CD4-positive, alpha-beta memory T cell (primary cell): ENCODE measurements at regions of chr14 and their contacts with region 1.

Region 1: DNA sequence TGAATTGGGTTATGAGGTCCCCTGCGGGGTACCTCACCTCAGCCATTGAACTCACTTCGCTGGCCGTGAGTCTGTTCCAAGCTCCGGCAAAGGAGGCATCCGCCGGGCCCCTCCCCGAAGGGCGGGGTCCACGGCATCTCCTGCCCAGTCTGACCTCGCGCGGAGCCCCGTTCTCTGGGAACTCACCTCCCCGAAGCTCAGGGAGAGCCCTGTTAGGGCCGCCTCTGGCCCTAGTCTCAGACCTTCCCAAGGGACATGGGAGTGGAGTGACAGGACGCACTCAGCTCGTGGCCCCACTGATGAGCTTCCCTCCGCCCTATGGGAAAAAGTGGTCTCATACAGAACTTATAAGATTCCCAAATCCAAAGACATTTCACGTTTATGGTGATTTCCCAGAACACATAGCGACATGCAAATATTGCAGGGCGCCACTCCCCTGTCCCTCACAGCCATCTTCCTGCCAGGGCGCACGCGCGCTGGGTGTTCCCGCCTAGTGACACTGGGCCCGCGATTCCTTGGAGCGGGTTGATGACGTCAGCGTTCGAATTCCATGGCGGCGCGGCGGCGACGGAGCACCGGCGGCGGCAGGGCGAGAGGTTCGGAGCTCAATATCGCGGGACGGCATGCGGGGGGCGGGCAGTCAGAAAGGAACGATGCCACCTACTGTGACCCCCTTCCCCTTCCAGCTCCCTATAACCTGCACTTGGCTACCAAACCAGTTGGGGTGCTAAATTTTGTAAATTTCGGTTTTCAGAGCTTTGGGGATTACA is at the start of gene PARP2:
- DNase-seq: peak; percentile 93 to 96 (median 93)
- H3K4me3 ChIP-seq: peak within 1 kb of the TSS; percentile 67 to 71
- H3K4me3 Mint-ChIP-seq: peak within 1 kb of the TSS; percentile 92 to 99 (median 98)
- H3K27ac ChIP-seq: peak within 1 kb of the TSS; percentile 94
- H3K27ac Mint-ChIP-seq: peak within 1 kb of the TSS; percentile 97 to 100 (median 98)
- H3K4me1 ChIP-seq: peaks cover 7% of the 10 kb centered on the region
- H3K4me1 Mint-ChIP-seq: peaks cover 5 to 27% (median 10%) of the 10 kb centered on the region in 4 donors
- H3K27me3 ChIP-seq: no peaks in the 10 kb centered on the region
- H3K27me3 Mint-ChIP-seq: no peaks in the 10 kb centered on the region
- total RNA-seq, gene PARP2: 20.3 to 25.0 TPM

Region 2: GRCh38 chr14:20332788-20333493 is 10.3 kb before region 1 on chr14 and contains the start of gene CCNB1IP1:
- CTCF ChIA-PET with region 1: interaction called, 124 read pairs
- POLR2A ChIA-PET with region 1: interaction called, 70 read pairs
- intact Hi-C with region 1: loop called (anchors 1 kb)
- DNase-seq: peak; percentile 73 to 84 (median 73)
- H3K4me3 ChIP-seq: peak within 1 kb of the TSS; percentile 62 to 67
- H3K4me3 Mint-ChIP-seq: peak within 1 kb of the TSS; percentile 99 to 100 (median 99)
- H3K27ac ChIP-seq: peak within 1 kb of the TSS; percentile 67
- H3K27ac Mint-ChIP-seq: peak within 1 kb of the TSS; percentile 86 to 98 (median 98)
- H3K4me1 ChIP-seq: peaks cover 16% of the 10 kb centered on the region
- H3K4me1 Mint-ChIP-seq: peaks cover 20 to 41% (median 24%) of the 10 kb centered on the region in 4 donors
- H3K27me3 ChIP-seq: no peaks in the 10 kb centered on the region
- H3K27me3 Mint-ChIP-seq: no peaks in the 10 kb centered on the region
- total RNA-seq, gene CCNB1IP1: 21.2 to 24.3 TPM

Region 3: DNA sequence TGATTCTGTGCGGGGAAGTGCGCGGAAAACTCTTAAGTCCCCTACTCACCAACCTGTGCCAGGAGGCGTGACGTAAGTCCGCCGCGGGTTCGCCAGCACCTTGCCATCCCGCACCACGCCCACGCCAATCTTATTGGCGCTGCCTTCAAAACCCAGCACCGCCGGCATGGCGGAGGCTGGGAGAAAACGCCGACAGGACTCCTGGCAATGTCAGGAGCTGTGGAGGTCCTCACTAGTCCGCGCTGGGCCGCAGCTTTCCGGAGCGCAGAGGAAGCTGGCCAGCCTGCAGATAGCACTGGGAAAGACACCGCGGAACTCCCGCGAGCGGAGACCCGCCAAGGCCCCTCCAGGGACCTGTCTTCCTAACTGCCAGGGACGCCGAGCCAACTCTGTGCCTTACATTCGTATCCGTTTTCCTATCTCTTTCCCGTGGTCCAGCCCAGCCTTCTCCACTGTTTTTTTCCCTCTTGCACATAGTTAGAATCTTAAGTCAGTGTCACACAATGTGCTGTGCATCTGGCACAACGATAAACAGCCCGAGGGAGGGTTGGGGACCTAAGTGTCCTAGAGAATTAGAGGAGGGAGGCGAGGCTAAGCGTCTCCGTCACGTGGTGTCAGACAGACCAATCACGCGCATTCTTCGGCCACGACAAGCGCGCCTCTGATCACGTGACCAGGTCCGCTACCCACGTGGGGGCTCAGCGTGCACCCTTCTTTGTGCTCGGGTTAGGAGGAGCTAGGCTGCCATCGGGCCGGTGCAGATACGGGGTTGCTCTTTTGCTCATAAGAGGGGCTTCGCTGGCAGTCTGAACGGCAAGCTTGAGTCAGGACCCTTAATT is 111.5 kb after region 1 on chr14 and contains the starts of genes APEX1 and OSGEP:
- CTCF ChIA-PET with region 1: no interaction called
- POLR2A ChIA-PET with region 1: interaction called, 51 read pairs
- intact Hi-C with region 1: loop called (anchors 1 kb)
- DNase-seq: peak; percentile 96 to 99 (median 98)
- H3K4me3 ChIP-seq: peak within 1 kb of the TSS; percentile 70 to 99
- H3K4me3 Mint-ChIP-seq: peak within 1 kb of the TSS in 2 of 8 donors; percentile 13 to 23
- H3K27ac ChIP-seq: peak within 1 kb of the TSS; percentile 89
- H3K27ac Mint-ChIP-seq: peak within 1 kb of the TSS in 2 of 7 donors; percentile 19 to 55
- H3K4me1 ChIP-seq: peaks cover 53% of the 10 kb centered on the region
- H3K4me1 Mint-ChIP-seq: peaks cover 5 to 21% (median 12%) of the 10 kb centered on the region in 4 donors
- H3K27me3 ChIP-seq: no peaks in the 10 kb centered on the region
- H3K27me3 Mint-ChIP-seq: no peaks in the 10 kb centered on the region
- total RNA-seq, gene APEX1: 102 to 105 TPM
- total RNA-seq, gene OSGEP: 72.3 to 75.9 TPM

Region 4: DNA sequence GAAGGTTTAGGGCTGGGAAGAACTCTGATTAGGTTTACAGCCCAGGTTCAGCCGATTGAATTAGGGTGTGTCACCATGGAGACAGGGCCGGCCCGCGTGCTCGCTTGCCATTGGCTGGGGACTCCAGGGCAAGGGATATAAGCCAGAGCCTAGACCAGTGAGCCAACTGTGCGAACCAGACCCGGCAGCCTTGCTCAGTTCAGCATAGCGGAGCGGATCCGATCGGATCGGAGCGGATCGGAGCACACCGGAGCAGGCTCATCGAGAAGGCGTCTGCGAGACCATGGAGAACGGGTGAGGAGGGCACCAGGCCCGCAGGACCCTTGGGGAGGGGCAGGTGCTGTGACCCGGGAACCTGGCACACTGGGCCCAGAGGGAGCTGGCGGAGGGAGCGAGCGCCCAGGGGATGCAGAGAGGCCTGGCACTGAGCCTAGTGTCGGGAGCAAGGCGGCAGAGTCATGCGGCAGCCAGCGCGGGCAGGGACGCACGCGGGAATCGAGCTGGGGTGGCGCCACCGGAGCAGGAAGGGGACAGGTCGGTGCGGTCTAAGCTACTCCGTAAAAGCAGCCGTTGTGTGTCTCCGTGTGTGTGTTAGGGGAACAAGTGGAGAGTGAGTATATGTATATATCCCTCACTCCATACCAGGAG is 126.1 kb after region 1 on chr14 and contains the start of gene PNP:
- CTCF ChIA-PET with region 1: interaction called, 3 read pairs
- POLR2A ChIA-PET with region 1: interaction called, 20 read pairs
- intact Hi-C with region 1: no loop called
- DNase-seq: peak; percentile 84 to 92 (median 88)
- H3K4me3 ChIP-seq: peak within 1 kb of the TSS; percentile 84 to 92
- H3K4me3 Mint-ChIP-seq: peak within 1 kb of the TSS; percentile 97 to 100 (median 99)
- H3K27ac ChIP-seq: peak within 1 kb of the TSS; percentile 77
- H3K27ac Mint-ChIP-seq: peak within 1 kb of the TSS; percentile 94 to 99 (median 98)
- H3K4me1 ChIP-seq: peaks cover 47% of the 10 kb centered on the region
- H3K4me1 Mint-ChIP-seq: peaks cover 33 to 55% (median 43%) of the 10 kb centered on the region in 4 donors
- H3K27me3 ChIP-seq: no peaks in the 10 kb centered on the region
- H3K27me3 Mint-ChIP-seq: no peaks in the 10 kb centered on the region
- total RNA-seq, gene PNP: 106 to 108 TPM

Region 5: DNA sequence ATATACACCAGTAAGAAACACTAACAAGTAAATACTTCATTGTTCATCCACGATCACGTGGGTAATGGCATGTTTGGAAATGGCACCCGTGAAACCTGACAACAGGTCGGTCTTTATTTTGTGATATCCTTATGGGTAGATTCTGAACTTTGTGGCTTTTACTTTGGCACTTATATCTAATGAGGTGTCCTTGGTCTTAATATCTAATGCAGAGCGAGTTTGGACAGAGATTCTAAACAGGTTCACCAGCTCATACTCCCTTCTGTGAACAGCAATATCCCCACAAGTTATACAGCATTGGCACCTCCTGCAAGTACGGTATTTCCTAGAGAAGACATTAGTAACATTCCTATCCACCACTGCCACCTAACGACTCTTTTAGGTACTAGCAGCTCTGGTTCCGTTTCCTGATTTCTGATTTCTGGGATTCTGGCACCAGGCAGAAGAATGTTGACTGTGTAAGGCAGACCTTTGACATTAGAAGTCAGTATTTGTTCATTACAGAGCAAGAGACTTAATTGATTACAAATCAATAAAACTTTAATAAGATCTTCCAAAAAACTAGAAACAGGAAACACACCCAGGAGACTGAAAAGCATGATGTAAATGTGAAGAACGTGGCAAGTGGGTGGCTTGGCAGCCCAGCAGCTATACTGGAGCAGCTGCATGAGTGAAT is 347.7 kb after region 1 on chr14:
- CTCF ChIA-PET with region 1: interaction called, 11 read pairs
- POLR2A ChIA-PET with region 1: interaction called, 3 read pairs
- intact Hi-C with region 1: no loop called
- DNase-seq: peak; percentile 55 to 69 (median 65)
- H3K4me3 ChIP-seq: no peak overlapping the region
- H3K4me3 Mint-ChIP-seq: no peak overlapping the region
- H3K27ac ChIP-seq: no peak overlapping the region
- H3K27ac Mint-ChIP-seq: peak overlapping the region in 1 of 7 donors; percentile 3
- H3K4me1 ChIP-seq: no peaks in the 10 kb centered on the region
- H3K4me1 Mint-ChIP-seq: peaks cover 5 to 6% (median 6%) of the 10 kb centered on the region in 4 donors
- H3K27me3 ChIP-seq: no peaks in the 10 kb centered on the region
- H3K27me3 Mint-ChIP-seq: no peaks in the 10 kb centered on the region